ENCODE measurements at regions of chr1 and their contacts with region 1.

Region 1: DNA sequence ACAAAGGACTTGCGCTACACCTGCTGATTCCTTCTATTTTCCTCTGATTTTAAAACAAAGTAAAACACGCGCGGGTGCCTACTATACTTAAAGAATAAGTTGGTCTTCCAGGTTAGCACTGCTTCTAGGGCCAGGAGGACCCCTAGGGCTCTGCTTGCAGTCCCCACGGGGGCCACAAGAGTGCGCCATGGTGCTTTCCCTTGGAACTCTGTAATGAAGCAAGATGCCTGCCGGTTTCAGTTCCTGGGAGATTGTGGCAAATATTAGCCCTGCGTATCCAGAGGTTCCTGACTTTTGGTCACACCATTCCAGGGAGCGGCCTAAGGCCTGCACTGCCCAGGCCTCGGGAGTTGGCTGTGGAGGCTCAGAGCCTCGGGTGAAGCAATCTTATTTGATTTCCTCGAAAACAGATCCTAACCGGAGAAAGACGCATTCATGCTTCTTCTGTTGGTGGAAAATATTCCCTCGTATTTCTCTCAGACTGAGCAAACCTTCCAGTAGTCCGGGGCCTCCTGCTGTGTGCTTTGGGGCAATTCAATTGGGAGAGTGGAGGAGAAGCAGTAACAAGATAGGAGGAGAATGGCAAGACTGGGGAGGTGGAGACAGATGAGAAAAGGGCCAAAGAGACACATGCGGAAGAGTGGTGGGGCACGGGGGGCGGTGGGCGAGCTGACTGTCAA is 25.3 kb downstream of the ADAM30 start:
- DNase-seq: peak; percentile 81
- ATAC-seq: peak; percentile 47
- H3K4me3 Mint-ChIP-seq: no peak overlapping the region
- H3K27ac Mint-ChIP-seq: no peak overlapping the region
- H3K4me1 Mint-ChIP-seq: no peaks in the 10 kb centered on the region
- H3K27me3 Mint-ChIP-seq: peaks cover 18% of the 10 kb centered on the region

Region 2: DNA sequence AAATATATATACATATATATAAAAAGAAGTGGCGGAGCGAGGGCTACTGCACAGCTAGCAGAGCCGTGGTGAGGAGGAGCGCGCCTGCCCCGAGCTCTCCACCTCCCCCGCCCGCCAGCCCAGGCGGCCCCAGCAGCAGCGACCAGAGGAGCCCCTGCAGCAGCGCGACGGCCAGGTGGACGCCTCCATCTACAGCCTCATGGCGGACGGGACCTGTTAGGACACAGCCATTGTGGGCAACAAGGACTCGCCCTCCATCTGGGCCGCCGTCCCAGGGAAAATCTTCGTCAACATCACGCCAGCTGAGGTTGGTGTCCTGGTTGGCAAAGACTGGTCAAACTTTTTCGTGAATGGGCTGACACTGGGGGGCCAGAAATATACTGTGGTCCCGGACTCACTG is 17.9 kb before region 1 on chr1:
- CTCF ChIA-PET with region 1: interaction called, 9 read pairs
- POLR2A ChIA-PET with region 1: no interaction called
- intact Hi-C with region 1: loop called in 1 of 2 experiments (anchors 2 kb)
- DNase-seq: no peak
- ATAC-seq: no peak
- H3K4me3 Mint-ChIP-seq: no peak overlapping the region
- H3K27ac Mint-ChIP-seq: no peak overlapping the region
- H3K4me1 Mint-ChIP-seq: no peaks in the 10 kb centered on the region
- H3K27me3 Mint-ChIP-seq: peaks cover 2% of the 10 kb centered on the region

Region 3: GRCh38 chr1:119917304-119918055 is 46.4 kb after region 1 on chr1:
- CTCF ChIA-PET with region 1: no interaction called
- POLR2A ChIA-PET with region 1: no interaction called
- intact Hi-C with region 1: no loop called
- DNase-seq: no peak
- ATAC-seq: no peak
- H3K4me3 Mint-ChIP-seq: no peak overlapping the region
- H3K27ac Mint-ChIP-seq: no peak overlapping the region
- H3K4me1 Mint-ChIP-seq: no peaks in the 10 kb centered on the region
- H3K27me3 Mint-ChIP-seq: no peaks in the 10 kb centered on the region

Region 4: DNA sequence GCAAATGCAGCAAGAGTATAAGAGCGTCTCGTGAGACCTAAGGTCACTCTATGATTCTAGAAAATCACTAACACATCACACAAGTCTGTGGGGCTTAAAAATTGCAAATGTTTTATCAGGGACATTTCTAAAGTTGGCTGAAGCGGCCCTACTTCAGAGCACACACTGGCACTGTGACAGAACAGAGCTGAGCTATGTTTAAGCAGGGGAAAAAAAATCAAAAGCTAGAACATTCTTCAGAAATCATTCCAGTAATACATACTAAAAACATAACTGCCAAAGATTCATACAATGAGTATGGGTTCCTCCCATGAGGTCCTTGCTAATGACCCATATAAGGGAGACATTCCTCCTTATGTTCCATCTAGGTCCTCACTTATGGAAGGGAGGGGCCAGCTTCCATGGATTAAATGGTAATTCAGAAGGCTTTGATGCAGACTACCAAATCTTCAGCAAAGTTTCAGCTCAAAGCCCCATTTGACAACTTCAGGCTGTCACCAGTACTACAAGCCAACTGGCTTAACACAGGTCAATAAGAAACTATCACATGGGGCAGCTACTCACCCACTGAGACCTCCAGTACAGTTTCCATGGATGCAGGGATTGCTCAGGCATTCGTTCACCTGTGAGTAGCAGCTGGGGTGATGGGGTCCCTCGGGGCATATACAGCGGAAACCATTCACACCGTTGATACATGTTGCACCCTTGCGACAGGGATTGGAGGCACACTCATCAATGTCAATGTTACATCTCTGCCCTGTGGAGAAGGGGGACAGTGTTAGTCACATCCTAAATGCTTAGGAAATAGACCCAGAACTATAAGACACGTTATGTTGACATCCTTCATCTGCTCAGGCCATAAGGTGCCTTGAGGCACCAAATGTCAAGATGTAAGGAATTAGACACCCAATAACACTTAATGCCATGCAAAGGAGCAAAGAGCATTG is 83.7 kb after region 1 on chr1:
- CTCF ChIA-PET with region 1: no interaction called
- POLR2A ChIA-PET with region 1: no interaction called
- intact Hi-C with region 1: loop called in 1 of 2 experiments (anchors 5 kb)
- DNase-seq: no peak
- ATAC-seq: peak; percentile 60
- H3K4me3 Mint-ChIP-seq: no peak overlapping the region
- H3K27ac Mint-ChIP-seq: peak overlapping the region; percentile 47
- H3K4me1 Mint-ChIP-seq: peaks cover 12% of the 10 kb centered on the region
- H3K27me3 Mint-ChIP-seq: no peaks in the 10 kb centered on the region